Transverse colon (tissue), 4 donors: ENCODE measurements at regions of chr1 and their contacts with region 1.

Region 1: DNA sequence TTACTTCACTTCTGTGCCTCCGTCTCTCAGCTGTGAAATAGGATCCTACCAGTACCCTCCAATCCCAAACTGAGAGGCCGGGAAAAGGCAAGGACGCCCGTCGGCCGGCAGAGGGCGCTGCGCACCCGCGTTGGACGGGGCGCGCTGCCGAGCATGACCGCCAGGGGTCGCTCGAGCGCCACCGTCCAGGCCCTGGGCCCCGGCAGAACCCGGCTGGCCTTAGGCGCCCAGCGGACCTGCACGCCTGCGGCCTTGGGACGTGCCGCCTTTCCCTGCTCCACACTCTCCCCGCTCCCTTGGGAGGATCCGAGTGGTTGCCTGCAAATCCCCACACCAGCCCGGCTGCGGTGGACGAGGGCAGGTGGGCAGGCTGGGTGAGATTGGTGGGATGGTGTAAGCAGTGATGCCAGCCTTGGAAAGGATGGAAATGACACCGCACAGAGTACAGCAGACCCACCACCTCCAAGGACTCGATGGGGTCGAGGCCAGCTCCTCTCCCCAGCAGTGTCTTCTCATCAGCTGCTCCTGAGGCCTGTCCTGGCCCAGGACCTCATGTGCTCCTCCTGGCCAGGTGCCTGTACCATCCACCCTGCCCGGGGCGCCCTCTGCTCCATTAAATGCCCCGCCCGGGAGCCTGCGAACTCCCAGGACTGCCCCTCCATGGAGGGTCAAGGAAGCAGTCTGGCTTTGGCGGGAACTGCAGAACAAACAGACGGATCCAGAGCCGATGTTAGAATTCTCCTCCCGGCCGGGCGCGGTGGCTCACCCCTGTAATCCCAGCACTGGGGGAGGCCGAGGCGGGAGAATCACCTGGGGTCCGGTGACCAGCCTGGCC is 47.4 kb upstream of the LBR start:
- DNase-seq: peak; percentile 66
- H3K4me3 ChIP-seq: no peak overlapping the region
- H3K27ac ChIP-seq: peak overlapping the region in 2 of 4 donors; percentile 45 to 59
- H3K4me1 ChIP-seq: peaks cover 7 to 22% (median 12%) of the 10 kb centered on the region in 4 donors
- H3K27me3 ChIP-seq: no peaks in the 10 kb centered on the region
- CTCF ChIP-seq: peak; percentile 100
- EP300 ChIP-seq: no peak
- POLR2A ChIP-seq: no peak

Region 2: GRCh38 chr1:225454733-225455132 is 20.5 kb before region 1 on chr1:
- in situ Hi-C with region 1: no loop called
- intact Hi-C with region 1: no loop called
- DNase-seq: peak; percentile 14
- H3K4me3 ChIP-seq: no peak overlapping the region
- H3K27ac ChIP-seq: peak overlapping the region; percentile 22 to 93 (median 90)
- H3K4me1 ChIP-seq: peaks cover 0 to 22% (median 12%) of the 10 kb centered on the region in 4 donors
- H3K27me3 ChIP-seq: no peaks in the 10 kb centered on the region
- CTCF ChIP-seq: no peak
- EP300 ChIP-seq: no peak
- POLR2A ChIP-seq: no peak

Region 3: GRCh38 chr1:225766967-225767633 is 291.9 kb after region 1 on chr1:
- in situ Hi-C with region 1: loop called (anchors 5 to 25 kb)
- intact Hi-C with region 1: loop called (anchors 2 kb)
- DNase-seq: peak; percentile 33
- H3K4me3 ChIP-seq: no peak overlapping the region
- H3K27ac ChIP-seq: peak overlapping the region; percentile 62 to 75 (median 70)
- H3K4me1 ChIP-seq: peaks cover 7 to 46% (median 17%) of the 10 kb centered on the region in 4 donors
- H3K27me3 ChIP-seq: no peaks in the 10 kb centered on the region
- CTCF ChIP-seq: no peak
- EP300 ChIP-seq: peak; percentile 21
- POLR2A ChIP-seq: no peak

Region 4: DNA sequence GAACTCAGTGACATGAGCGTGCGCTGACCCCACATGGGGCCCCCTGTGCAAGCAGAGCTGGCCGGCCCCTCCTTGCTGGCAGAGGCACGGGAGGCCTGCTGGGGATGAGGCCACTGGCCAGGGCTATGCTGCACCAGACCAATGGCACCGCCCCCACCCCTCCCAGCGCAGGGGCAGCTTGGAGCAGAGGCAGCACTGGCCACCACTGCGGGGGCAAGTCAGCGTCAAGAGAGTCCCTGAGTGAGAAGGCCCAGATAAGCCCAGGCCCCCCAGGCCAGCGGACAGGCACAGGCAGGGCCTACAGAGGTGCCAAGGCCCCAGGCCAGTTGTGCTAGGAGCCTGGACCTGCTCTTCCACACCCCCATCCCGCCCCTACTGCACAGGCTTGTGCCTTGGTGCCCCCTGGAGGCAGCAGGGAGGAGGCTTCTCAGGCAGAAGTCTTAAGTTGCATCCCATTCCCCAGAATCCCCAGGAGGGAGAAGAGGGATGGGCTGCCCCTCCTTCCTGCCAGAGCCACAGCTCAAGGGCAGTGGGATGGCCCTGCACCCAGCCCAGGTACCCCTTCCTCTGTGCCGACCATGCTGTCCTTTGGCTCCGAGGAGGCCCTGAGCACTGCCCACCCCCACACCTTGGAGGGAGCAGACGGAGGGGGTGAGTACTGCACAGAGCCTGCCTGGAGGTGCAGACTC is 370.5 kb after region 1 on chr1:
- in situ Hi-C with region 1: no loop called
- intact Hi-C with region 1: loop called (anchors 1 kb)
- DNase-seq: peak; percentile 74
- H3K4me3 ChIP-seq: no peak overlapping the region
- H3K27ac ChIP-seq: peak overlapping the region in 3 of 4 donors; percentile 37 to 52 (median 38)
- H3K4me1 ChIP-seq: peaks cover 0 to 21% (median 18%) of the 10 kb centered on the region in 4 donors
- H3K27me3 ChIP-seq: no peaks in the 10 kb centered on the region
- CTCF ChIP-seq: peak; percentile 58 to 71 (median 64)
- EP300 ChIP-seq: no peak
- POLR2A ChIP-seq: no peak

Region 5: DNA sequence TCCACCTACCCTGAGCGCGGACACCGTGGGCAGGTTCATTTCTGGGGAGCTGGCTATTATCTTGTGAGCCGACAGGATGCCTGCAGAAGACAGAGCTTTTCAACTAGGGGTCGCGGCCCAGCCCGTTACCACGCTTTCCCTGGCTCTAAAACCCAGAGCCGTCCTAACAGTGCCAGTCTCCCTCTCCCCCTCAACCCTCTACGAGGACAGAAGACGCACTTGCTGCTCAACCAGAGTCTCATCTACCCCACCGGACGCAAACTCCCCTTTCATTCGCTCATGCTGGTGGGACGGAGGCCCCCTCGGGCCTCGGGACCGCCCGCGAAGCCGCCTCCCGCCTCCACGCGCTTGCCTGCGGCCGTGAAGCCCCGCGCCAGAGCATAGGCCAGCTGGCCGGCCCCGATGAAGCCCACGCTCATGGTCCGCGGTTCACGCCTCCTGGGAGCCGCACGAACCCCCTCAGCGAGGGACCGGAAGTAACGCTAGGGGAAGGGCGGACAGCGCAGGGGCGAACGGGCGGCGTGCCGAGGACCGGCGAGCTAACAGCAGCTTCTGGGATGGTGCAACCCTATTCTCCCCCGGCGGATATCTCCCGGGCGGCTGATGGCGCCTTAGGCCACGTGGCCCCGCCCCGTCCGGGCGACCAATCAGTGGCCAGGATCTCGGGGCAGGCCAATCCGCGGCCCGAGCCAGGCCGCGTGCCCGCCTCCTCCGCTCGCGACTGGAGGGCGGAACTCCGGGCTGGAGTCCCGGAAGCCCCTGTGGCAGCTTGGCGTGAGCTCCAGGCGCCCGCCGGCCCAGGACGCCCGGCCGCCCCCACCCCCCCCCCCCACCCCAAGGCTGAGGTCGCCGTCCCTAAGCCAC is 448.7 kb after region 1 on chr1 and contains the start of gene PYCR2:
- in situ Hi-C with region 1: loop called in 1 of 4 experiments (anchors 25 kb)
- intact Hi-C with region 1: no loop called
- DNase-seq: peak; percentile 96
- H3K4me3 ChIP-seq: peak within 1 kb of the TSS; percentile 63 to 91 (median 86)
- H3K27ac ChIP-seq: peak within 1 kb of the TSS; percentile 91 to 98 (median 94)
- H3K4me1 ChIP-seq: peaks cover 9 to 32% (median 26%) of the 10 kb centered on the region in 4 donors
- H3K27me3 ChIP-seq: no peaks in the 10 kb centered on the region
- CTCF ChIP-seq: no peak
- EP300 ChIP-seq: no peak
- POLR2A ChIP-seq: peak; percentile 89
- total RNA-seq, gene PYCR2: 26.5 to 40.6 (median 32.2) TPM

Region 6: GRCh38 chr1:225987491-225988316 is 512.5 kb after region 1 on chr1:
- in situ Hi-C with region 1: loop called in 1 of 4 experiments (anchors 10 kb)
- intact Hi-C with region 1: no loop called
- DNase-seq: no peak
- H3K4me3 ChIP-seq: no peak overlapping the region
- H3K27ac ChIP-seq: no peak overlapping the region
- H3K4me1 ChIP-seq: peaks cover 0 to 7% (median 2%) of the 10 kb centered on the region in 4 donors
- H3K27me3 ChIP-seq: no peaks in the 10 kb centered on the region
- CTCF ChIP-seq: peak; percentile 61 to 78 (median 69)
- EP300 ChIP-seq: no peak
- POLR2A ChIP-seq: no peak